Left ventricle myocardium inferior (tissue), 1 donor: ENCODE measurements at regions of chr9 and their contacts with region 1.

Region 1: GRCh38 chr9:91536211-91536691 is 112.6 kb upstream of the NFIL3 start:
- DNase-seq: no peak
- H3K4me3 ChIP-seq: no peak overlapping the region
- H3K27ac ChIP-seq: no peak overlapping the region
- H3K4me1 ChIP-seq: no peaks in the 10 kb centered on the region
- H3K27me3 ChIP-seq: peaks cover 15% of the 10 kb centered on the region
- CTCF ChIP-seq: no peak

Region 2: GRCh38 chr9:91474656-91475055 is 61.6 kb before region 1 on chr9:
- intact Hi-C with region 1: loop called (anchors 10 kb)
- DNase-seq: no peak
- H3K4me3 ChIP-seq: no peak overlapping the region
- H3K27ac ChIP-seq: no peak overlapping the region
- H3K4me1 ChIP-seq: peaks cover 5% of the 10 kb centered on the region
- H3K27me3 ChIP-seq: no peaks in the 10 kb centered on the region
- CTCF ChIP-seq: no peak